Aorta (tissue), 5 donors: ENCODE measurements at regions of chr18 and their contacts with region 1.

Region 1: GRCh38 chr18:11178951-11179549 is 29.7 kb upstream of the PIEZO2 start:
- DNase-seq: peak; percentile 78 to 92
- ATAC-seq: peak; percentile 90
- H3K4me3 ChIP-seq: no peak overlapping the region
- H3K27ac ChIP-seq: peak overlapping the region in 1 of 2 donors; percentile 30
- H3K4me1 ChIP-seq: peaks cover 0 to 6% of the 10 kb centered on the region in 2 donors
- H3K27me3 ChIP-seq: no peaks in the 10 kb centered on the region

Region 2: GRCh38 chr18:11324956-11325873 is 146.2 kb after region 1 on chr18:
- intact Hi-C with region 1: loop called in 1 of 2 experiments (anchors 5 kb)
- DNase-seq: no peak
- ATAC-seq: no peak
- H3K4me3 ChIP-seq: no peak overlapping the region
- H3K27ac ChIP-seq: no peak overlapping the region
- H3K4me1 ChIP-seq: peaks cover 2% of the 10 kb centered on the region in 2 donors
- H3K27me3 ChIP-seq: no peaks in the 10 kb centered on the region